ENCODE measurements at regions of chr5 and their contacts with region 1.

Region 1: GRCh38 chr5:57338068-57338892 is 144.3 kb downstream of the ACTBL2 start:
- DNase-seq: peak; percentile 29
- H3K4me3 Mint-ChIP-seq: no peak overlapping the region
- H3K27ac Mint-ChIP-seq: no peak overlapping the region
- H3K4me1 Mint-ChIP-seq: no peaks in the 10 kb centered on the region
- H3K27me3 Mint-ChIP-seq: no peaks in the 10 kb centered on the region

Region 2: DNA sequence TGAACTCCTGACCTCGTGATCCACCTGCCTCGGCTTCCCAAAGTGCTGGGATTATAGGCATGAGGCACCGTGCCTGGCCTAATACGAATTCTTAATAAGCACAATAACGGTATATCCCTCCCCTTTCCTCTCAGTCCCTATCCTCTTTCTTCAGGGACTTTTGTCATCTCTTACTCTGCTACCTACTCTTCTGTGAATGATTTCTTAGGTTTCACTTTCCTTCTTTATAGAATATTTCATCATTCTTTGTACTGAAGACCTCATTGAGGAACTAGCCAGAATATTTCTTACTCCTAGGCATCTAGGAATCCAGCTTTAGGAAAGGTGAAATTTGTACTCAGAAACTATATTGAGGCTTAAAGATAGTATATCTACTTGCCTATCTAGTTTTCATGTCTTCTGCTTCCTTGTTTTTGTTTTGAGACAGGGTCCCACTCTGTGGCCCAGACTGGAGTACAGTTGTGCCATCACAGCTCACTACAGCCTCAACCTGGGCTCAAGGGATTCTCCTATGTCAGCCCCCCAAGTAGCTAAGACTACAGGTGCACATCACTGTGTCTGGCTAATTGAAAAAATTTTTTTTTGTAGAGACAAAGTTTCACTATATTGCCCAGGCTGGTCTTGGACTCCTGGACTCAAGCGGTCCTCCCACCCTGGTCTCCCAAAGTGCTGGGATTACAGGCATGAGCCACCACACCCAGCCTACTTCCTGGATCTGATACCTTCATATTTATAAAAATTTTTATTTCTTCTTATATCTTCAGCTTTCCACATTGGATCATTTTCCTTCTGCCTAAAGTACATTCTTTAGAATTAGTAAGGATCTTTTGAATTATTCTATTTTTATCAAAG is 94.8 kb before region 1 on chr5:
- CTCF ChIA-PET with region 1: no interaction called
- DNase-seq: no peak
- H3K4me3 Mint-ChIP-seq: no peak overlapping the region
- H3K27ac Mint-ChIP-seq: peak overlapping the region; percentile 52
- H3K4me1 Mint-ChIP-seq: peaks cover 26% of the 10 kb centered on the region
- H3K27me3 Mint-ChIP-seq: no peaks in the 10 kb centered on the region

Region 3: GRCh38 chr5:57360871-57361270 is 22.6 kb after region 1 on chr5:
- CTCF ChIA-PET with region 1: no interaction called
- DNase-seq: no peak
- H3K4me3 Mint-ChIP-seq: no peak overlapping the region
- H3K27ac Mint-ChIP-seq: no peak overlapping the region
- H3K4me1 Mint-ChIP-seq: no peaks in the 10 kb centered on the region
- H3K27me3 Mint-ChIP-seq: no peaks in the 10 kb centered on the region

Region 4: GRCh38 chr5:57494104-57495098 is 156.1 kb after region 1 on chr5:
- CTCF ChIA-PET with region 1: interaction called, 14 read pairs
- DNase-seq: peak; percentile 29
- H3K4me3 Mint-ChIP-seq: no peak overlapping the region
- H3K27ac Mint-ChIP-seq: peak overlapping the region; percentile 87
- H3K4me1 Mint-ChIP-seq: peaks cover 47% of the 10 kb centered on the region
- H3K27me3 Mint-ChIP-seq: no peaks in the 10 kb centered on the region

Measured in activated naive CD4-positive, alpha-beta T cell treated with anti-CD3 and anti-CD28 coated beads, Interleukin-2, amount 10 ng/mL, durations not matched to agents 7 days and 5 days (primary cell).